ENCODE measurements at regions of chr1 and their contacts with region 1.

Region 1: GRCh38 chr1:87953732-87954344 is 625.2 kb downstream of the LMO4 start:
- DNase-seq: peak; percentile 21
- H3K4me3 ChIP-seq: no peak overlapping the region
- H3K27ac ChIP-seq: no peak overlapping the region
- H3K4me1 ChIP-seq: peaks cover 0 to 26% of the 10 kb centered on the region in 2 experiments; a peak in 3 of 4 replicates
- H3K27me3 ChIP-seq: no peaks in the 10 kb centered on the region
- CTCF ChIP-seq: peak; percentile 85
- EP300 ChIP-seq: no peak
- RAD21 ChIP-seq: peak; percentile 78

Region 2: GRCh38 chr1:87134625-87135328 is 819.1 kb before region 1 on chr1:
- CTCF ChIA-PET with region 1: interaction called, 14 read pairs
- POLR2A ChIA-PET with region 1: no interaction called
- DNase-seq: no peak
- H3K4me3 ChIP-seq: no peak overlapping the region
- H3K27ac ChIP-seq: no peak overlapping the region
- H3K4me1 ChIP-seq: no peaks in the 10 kb centered on the region; a peak in 1 of 4 replicates
- H3K27me3 ChIP-seq: no peaks in the 10 kb centered on the region
- CTCF ChIP-seq: no peak
- EP300 ChIP-seq: no peak
- RAD21 ChIP-seq: no peak

Region 3: GRCh38 chr1:87292684-87293493 is 660.9 kb before region 1 on chr1:
- CTCF ChIA-PET with region 1: interaction called, 46 read pairs
- POLR2A ChIA-PET with region 1: no interaction called
- DNase-seq: peak; percentile 57
- H3K4me3 ChIP-seq: no peak overlapping the region; a peak in 1 of 4 replicates
- H3K27ac ChIP-seq: no peak overlapping the region
- H3K4me1 ChIP-seq: no peaks in the 10 kb centered on the region; a peak in 1 of 4 replicates
- H3K27me3 ChIP-seq: no peaks in the 10 kb centered on the region
- CTCF ChIP-seq: peak; percentile 89
- EP300 ChIP-seq: no peak
- RAD21 ChIP-seq: peak; percentile 86

Region 4: DNA sequence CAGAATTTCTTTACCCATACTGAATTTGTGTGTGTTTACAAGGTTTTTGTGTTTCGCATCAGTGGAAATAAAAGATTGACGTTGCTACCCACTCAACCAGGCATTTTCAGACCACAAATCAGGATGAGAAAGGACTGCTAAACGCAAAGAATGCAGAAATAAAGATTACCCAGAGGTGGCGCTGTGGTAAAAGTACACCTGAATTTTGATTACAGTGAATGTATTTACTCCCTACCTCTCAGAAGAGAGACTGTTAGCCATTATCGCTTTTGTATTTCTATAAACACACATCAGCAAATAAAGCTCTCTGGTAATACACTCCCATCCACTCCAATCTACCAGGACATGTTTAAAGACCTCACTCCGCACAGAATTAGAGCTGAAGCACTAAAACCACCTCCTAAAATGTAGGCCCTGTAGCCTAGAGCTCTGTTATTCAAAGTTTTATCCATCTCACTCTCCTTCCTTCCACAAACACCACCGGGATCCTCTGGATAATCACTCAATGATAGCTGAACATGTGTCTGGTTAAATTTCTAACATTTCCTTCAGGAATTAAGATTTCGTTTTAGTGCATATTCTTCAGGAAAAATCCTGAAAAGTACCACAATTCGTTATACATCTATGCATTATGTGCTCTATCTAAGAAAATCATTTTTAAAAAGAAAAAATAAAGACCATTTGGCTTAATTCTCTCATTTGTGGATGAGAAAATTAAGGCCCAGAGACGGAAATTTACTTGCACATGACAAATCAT is 627.7 kb before region 1 on chr1:
- CTCF ChIA-PET with region 1: interaction called, 17 read pairs
- POLR2A ChIA-PET with region 1: no interaction called
- DNase-seq: peak; percentile 40
- H3K4me3 ChIP-seq: no peak overlapping the region; a peak in 1 of 4 replicates
- H3K27ac ChIP-seq: no peak overlapping the region
- H3K4me1 ChIP-seq: peaks cover 0 to 4% of the 10 kb centered on the region in 2 experiments; a peak in 2 of 4 replicates
- H3K27me3 ChIP-seq: no peaks in the 10 kb centered on the region
- CTCF ChIP-seq: peak; percentile 87
- EP300 ChIP-seq: no peak
- RAD21 ChIP-seq: peak; percentile 75

Region 5: GRCh38 chr1:87913361-87913760 is 40.5 kb before region 1 on chr1:
- CTCF ChIA-PET with region 1: no interaction called
- POLR2A ChIA-PET with region 1: no interaction called
- DNase-seq: no peak
- H3K4me3 ChIP-seq: no peak overlapping the region
- H3K27ac ChIP-seq: no peak overlapping the region
- H3K4me1 ChIP-seq: no peaks in the 10 kb centered on the region
- H3K27me3 ChIP-seq: no peaks in the 10 kb centered on the region
- CTCF ChIP-seq: no peak
- EP300 ChIP-seq: no peak
- RAD21 ChIP-seq: no peak

Region 6: DNA sequence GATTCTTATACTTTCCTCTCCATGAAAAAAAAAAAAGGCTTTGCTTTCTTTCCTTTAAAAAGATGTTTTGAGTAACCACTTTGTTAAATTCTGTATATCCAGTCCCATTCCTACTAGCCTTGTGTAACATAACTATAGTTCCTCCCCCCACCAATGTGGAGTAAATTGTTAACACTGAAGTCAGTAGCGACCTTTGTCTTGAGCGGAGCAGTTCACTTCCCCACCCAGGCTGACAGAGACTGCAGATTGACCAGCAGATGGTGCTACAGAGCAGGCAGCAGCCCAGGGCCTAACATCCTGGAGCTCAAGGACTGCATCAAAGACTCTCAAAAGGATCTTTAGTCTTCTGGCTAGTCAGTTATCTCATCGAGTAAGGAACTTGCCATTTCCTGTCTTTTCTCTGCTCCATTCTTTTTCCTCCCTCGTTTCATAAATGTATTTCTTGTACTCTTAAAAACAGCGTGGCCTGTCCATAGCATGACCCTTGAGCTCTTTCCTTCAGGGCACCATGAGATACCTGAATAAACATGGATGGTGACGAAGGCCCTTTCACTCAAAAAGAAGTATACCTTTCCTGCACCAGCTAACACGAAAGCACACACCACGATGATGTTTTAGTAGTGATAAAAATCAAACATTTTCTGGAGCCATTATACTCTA is 226.7 kb after region 1 on chr1:
- CTCF ChIA-PET with region 1: no interaction called
- POLR2A ChIA-PET with region 1: no interaction called
- DNase-seq: peak; percentile 44
- H3K4me3 ChIP-seq: peak overlapping the region in 1 of 2 experiments; percentile 40; a peak in 1 of 4 replicates
- H3K27ac ChIP-seq: no peak overlapping the region
- H3K4me1 ChIP-seq: peaks cover 0 to 2% of the 10 kb centered on the region in 2 experiments; a peak in 2 of 4 replicates
- H3K27me3 ChIP-seq: no peaks in the 10 kb centered on the region
- CTCF ChIP-seq: peak; percentile 98
- EP300 ChIP-seq: no peak
- RAD21 ChIP-seq: peak; percentile 81

Measured in SK-N-SH (cell line).